A673 (cell line): ENCODE measurements at regions of chr11 and their contacts with region 1.

Region 1: DNA sequence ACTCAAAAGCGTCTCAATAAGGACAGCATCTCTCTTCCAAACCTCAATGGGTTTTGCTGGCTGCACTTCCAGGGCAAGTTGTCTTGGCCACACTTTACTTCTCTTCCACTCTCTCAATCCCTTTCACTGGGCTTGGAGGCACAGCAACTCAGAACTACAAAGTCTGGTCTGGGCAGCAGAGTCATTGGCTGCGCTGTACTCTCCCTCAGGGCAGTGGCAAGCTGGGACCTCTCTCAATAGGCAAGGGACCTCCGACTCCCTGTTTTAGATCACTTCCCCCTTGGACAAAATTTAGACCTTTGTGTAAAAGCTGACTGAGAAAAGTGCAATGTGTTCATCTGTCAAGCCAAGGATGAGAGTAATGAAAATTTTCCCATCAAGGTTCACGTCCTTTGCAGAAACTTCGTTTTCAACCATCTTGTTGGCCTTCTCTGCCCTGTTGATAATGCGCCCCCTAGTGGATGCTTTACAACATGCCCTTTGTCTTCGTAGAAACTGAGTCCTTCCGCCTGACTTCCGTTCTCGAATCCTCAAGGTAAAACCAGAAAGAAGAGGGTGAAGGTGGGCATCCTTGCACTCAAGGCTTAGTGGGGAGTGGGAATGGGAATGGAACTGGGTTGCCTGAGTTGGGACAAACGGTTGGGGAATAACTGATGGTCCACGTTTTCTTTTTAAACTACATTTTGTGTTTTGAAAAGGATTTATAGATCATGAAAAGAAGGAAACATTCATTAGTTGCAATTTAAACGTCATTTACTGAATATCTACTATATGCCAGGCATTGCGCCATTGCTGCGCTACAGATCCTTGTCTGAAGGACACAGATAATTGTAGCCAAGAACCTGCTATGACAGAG is 99.1 kb downstream of the CD44 start:
- DNase-seq: peak; percentile 94
- H3K4me3 ChIP-seq: no peak overlapping the region
- H3K27ac ChIP-seq: no peak overlapping the region
- H3K4me1 ChIP-seq: no peaks in the 10 kb centered on the region
- H3K27me3 ChIP-seq: peaks cover 32% of the 10 kb centered on the region
- CTCF ChIP-seq: peak; percentile 100

Region 2: DNA sequence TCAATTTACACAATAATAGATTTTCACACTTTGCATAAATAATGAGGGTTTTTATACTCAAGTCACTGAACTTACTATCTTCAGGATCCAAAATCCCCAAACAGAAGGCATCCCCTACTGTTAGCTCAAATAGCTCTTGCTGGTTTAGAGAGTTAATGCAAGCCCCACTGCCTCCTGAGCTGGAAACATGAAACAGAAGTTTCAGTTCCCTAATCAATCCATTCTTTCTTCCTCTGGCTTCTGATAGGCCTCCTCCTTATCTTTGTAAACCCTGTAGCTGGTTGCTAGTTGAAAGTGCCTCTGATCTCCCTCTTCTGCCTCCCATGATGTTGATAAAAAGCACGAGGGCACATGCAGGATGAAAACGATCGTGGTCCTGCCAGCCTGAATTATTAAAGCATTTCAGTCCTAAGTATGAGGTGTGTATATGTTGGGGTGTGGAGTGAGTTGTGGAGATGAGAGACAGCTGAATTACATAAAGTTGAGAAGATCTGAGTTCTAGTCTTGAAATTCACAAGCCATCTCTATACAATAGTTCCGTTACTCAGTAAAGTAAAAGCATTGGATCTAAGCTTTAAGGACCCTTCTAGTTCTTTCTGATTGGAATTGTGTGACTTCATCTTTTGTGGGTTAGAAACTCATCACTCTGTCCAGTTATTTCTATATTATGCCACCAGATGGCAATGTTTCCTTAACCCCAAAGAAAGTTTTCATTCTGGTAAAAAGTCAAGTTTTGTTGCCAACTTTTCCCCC is 652.2 kb before region 1 on chr11:
- CTCF ChIA-PET with region 1: no interaction called
- POLR2A ChIA-PET with region 1: no interaction called
- intact Hi-C with region 1: loop called (anchors 5 kb)
- DNase-seq: peak; percentile 86
- H3K4me3 ChIP-seq: no peak overlapping the region
- H3K27ac ChIP-seq: no peak overlapping the region
- H3K4me1 ChIP-seq: peaks cover 3% of the 10 kb centered on the region
- H3K27me3 ChIP-seq: peaks cover 39% of the 10 kb centered on the region
- CTCF ChIP-seq: peak; percentile 94

Region 3: DNA sequence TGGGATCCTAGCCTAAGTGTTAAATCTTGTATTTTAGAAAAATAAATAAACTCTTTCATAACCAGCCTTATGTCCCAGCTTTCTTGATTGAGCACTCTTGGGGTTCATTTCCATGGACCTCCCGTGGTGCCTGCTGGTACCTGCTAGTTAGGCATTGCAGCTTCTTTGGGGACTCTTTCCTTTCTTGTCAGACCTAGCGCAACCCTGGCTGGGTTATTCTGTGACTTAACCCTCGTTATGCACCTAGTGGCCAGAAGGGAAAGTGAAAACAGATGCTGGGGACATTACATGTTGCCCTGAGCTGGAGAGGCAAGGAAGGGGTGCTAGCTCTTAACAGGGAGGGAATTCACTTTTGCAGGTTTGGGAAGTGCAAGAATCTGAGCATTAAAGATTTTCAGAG is 368.7 kb before region 1 on chr11:
- CTCF ChIA-PET with region 1: no interaction called
- POLR2A ChIA-PET with region 1: interaction called, 12 read pairs
- intact Hi-C with region 1: no loop called
- DNase-seq: peak; percentile 41
- H3K4me3 ChIP-seq: no peak overlapping the region
- H3K27ac ChIP-seq: no peak overlapping the region
- H3K4me1 ChIP-seq: no peaks in the 10 kb centered on the region
- H3K27me3 ChIP-seq: peaks cover 3% of the 10 kb centered on the region
- CTCF ChIP-seq: peak; percentile 48

Region 4: GRCh38 chr11:34926101-34926830 is 311.8 kb before region 1 on chr11:
- CTCF ChIA-PET with region 1: interaction called, 4 read pairs
- POLR2A ChIA-PET with region 1: no interaction called
- intact Hi-C with region 1: loop called (anchors 1 kb)
- DNase-seq: peak; percentile 89
- H3K4me3 ChIP-seq: no peak overlapping the region
- H3K27ac ChIP-seq: no peak overlapping the region
- H3K4me1 ChIP-seq: peaks cover 25% of the 10 kb centered on the region
- H3K27me3 ChIP-seq: no peaks in the 10 kb centered on the region
- CTCF ChIP-seq: peak; percentile 98

Region 5: DNA sequence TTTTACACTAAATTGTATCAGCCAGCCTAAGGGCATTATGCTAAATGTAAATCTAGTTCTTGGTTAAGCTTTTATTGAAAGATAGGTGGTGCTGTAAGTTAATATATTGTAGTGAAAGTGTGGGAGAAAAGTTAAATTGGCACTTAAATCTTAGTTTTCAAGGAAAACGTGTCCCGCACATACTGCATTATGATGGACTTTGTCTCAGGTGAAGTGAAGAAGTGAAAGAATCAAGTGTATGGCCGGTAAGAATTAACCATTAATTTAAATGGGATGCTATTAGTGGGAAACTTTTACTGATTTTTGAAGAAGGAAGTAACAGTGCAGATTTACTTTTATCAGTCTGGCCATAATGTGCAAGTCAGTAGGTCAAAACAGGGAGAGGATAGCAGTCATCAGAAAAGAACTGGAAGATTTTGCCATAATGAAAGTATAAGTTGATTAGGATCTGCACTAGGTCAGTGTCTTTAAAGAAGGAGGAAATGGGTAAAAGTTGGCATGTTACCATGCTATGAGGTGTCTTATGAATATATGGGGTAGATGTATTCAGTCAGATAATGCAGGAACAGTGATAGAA is 240.0 kb before region 1 on chr11:
- CTCF ChIA-PET with region 1: interaction called, 6 read pairs
- POLR2A ChIA-PET with region 1: no interaction called
- intact Hi-C with region 1: loop called (anchors 1 kb)
- DNase-seq: peak; percentile 51
- H3K4me3 ChIP-seq: no peak overlapping the region
- H3K27ac ChIP-seq: no peak overlapping the region
- H3K4me1 ChIP-seq: peaks cover 13% of the 10 kb centered on the region
- H3K27me3 ChIP-seq: no peaks in the 10 kb centered on the region
- CTCF ChIP-seq: peak; percentile 80